ENCODE measurements at regions of chr1 and their contacts with region 1.

Region 1: DNA sequence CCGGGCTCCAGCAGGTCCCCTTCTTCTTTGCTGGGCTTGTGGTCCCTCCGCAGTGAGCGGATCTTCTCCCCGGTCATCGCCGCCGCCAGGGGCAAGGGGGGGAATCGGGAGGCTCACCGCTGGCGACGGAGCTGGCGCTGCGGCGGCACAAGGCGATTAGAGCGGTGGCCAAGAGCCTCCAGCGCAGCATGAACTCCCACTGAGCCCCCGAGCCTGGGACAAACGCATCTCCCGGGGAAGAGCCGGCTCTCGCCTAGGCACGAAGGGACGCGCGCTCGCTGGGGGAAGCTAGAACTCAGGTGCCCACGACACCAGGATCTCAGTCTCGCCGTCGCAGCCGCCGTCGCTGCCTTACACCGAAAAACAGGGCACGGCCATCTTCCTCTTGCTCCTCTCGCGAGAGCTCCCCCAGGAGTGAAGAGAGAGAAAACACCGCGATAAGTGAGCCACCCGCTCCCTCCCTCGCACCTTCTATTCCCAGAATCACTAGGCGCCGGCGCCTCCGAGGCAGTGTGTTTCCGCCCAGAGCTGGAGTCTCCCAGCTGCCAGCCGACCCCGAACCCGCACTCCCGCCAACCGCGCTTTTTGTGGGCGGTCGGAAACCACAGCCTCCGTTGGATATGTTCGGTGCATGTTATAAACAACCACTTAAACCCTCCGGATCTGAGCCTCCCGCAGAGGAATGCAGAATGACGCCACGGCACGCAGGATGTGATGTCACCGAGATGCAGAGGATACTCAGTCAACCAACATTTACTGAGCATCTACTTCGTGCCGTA is at the start of gene ANKRD13C:
- DNase-seq: peak; percentile 95
- ATAC-seq: peak; percentile 89
- H3K4me3 ChIP-seq: peak within 1 kb of the TSS; percentile 75 to 99 (median 95)
- H3K4me3 Mint-ChIP-seq: peak within 1 kb of the TSS; percentile 96
- H3K27ac ChIP-seq: peak within 1 kb of the TSS; percentile 91 to 93
- H3K27ac Mint-ChIP-seq: peak within 1 kb of the TSS; percentile 97
- H3K4me1 ChIP-seq: peaks cover 20 to 21% of the 10 kb centered on the region in 2 donors
- H3K4me1 Mint-ChIP-seq: peaks cover 40% of the 10 kb centered on the region
- H3K27me3 ChIP-seq: no peaks in the 10 kb centered on the region
- H3K27me3 Mint-ChIP-seq: no peaks in the 10 kb centered on the region
- CTCF ChIP-seq: no peak
- total RNA-seq, gene ANKRD13C: 29.9 and 31.9 TPM in 2 replicates

Region 2: DNA sequence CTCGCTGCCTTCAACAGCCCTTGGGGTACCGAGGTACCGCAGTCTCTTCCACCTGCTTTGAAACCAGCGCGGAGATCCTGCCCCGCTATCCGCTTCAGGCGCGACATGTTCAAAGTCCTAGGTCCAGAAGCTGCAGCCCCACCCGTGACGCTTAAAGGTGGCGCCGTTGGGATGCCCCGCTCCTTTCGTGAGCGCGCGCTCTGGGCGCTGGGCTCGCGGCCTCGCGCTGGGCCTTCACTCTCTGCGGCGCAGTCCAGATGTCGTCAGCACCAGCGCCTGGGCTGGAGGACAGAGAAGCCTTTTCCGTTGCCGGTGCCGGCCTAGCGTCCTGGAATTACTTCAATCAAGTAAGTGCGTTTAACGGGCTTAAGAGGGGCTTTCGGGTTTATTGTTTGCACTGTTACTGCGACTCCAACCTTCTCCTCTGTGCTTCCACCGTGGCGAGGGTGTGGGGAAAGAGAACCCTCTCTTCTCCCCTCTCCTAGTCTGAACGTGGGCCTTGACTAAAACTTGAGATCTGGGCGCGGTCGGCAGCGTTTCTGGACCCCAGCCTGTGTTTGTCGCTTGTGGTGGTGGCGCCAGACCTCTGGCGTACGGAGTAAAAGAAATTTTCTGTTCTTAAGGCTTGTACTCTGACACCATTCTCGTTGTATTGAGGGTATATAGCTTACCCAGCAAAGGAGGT is 148.9 kb before region 1 on chr1 and contains the start of gene LRRC40:
- CTCF ChIA-PET with region 1: no interaction called
- POLR2A ChIA-PET with region 1: no interaction called
- intact Hi-C with region 1: loop called (anchors 1 kb)
- DNase-seq: peak; percentile 96
- ATAC-seq: peak; percentile 96
- H3K4me3 ChIP-seq: peak within 1 kb of the TSS; percentile 63 to 93 (median 91)
- H3K4me3 Mint-ChIP-seq: peak within 1 kb of the TSS; percentile 98
- H3K27ac ChIP-seq: peak within 1 kb of the TSS; percentile 86 to 92
- H3K27ac Mint-ChIP-seq: peak within 1 kb of the TSS; percentile 98
- H3K4me1 ChIP-seq: peaks cover 18 to 30% of the 10 kb centered on the region in 2 donors
- H3K4me1 Mint-ChIP-seq: peaks cover 66% of the 10 kb centered on the region
- H3K27me3 ChIP-seq: no peaks in the 10 kb centered on the region
- H3K27me3 Mint-ChIP-seq: no peaks in the 10 kb centered on the region
- CTCF ChIP-seq: no peak
- total RNA-seq, gene LRRC40: 14.5 and 14.6 TPM in 2 replicates

Region 3: DNA sequence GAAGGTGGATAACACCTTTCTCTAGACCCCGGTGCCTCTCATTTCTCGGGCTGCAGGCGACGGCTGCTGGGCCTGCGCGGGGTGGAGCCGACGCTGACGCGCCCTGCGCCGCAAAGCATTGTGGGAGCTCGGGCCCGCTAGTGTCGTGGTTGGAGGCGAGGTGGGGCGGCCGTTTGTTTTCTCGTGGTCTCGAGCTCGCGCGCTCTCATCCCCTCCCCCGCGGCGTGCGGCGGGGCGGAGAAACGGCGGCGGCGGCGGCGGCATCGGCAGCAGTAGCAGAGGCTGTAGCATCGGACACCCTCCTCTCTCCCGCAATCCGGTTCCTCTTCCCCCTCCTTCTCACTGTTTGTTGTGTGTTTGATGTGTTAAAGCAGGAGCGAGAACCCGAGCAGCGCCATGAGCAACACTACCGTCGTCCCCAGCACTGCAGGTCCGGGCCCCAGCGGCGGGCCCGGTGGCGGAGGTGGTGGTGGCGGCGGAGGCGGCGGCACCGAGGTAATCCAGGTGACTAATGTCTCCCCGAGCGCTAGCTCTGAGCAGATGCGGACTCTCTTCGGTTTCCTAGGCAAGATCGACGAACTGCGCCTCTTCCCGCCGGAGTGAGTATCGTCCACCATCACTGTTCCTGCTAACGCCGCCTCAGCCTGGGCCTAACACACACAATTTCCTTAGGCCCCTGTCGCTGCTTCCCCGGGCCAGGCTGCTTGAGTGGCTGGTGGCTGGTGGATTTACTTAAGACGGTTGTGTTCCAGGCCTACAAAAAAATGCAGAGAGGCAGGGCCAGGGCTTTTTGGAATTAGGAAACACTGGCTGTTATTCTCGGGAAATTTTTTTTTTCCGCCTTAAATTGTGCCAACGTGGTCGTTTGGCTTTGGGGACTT is 133.0 kb before region 1 on chr1 and contains the start of gene SRSF11:
- CTCF ChIA-PET with region 1: interaction called, 4 read pairs
- POLR2A ChIA-PET with region 1: interaction called, 4 read pairs
- intact Hi-C with region 1: loop called (anchors 1 kb)
- DNase-seq: peak; percentile 97
- ATAC-seq: peak; percentile 96
- H3K4me3 ChIP-seq: peak within 1 kb of the TSS; percentile 69 to 81 (median 79)
- H3K4me3 Mint-ChIP-seq: peak within 1 kb of the TSS; percentile 93
- H3K27ac ChIP-seq: peak within 1 kb of the TSS; percentile 94
- H3K27ac Mint-ChIP-seq: peak within 1 kb of the TSS; percentile 97
- H3K4me1 ChIP-seq: peaks cover 11 to 25% of the 10 kb centered on the region in 2 donors
- H3K4me1 Mint-ChIP-seq: peaks cover 47% of the 10 kb centered on the region
- H3K27me3 ChIP-seq: no peaks in the 10 kb centered on the region
- H3K27me3 Mint-ChIP-seq: no peaks in the 10 kb centered on the region
- CTCF ChIP-seq: no peak
- total RNA-seq, gene SRSF11: 322 and 333 TPM in 2 replicates

Region 4: DNA sequence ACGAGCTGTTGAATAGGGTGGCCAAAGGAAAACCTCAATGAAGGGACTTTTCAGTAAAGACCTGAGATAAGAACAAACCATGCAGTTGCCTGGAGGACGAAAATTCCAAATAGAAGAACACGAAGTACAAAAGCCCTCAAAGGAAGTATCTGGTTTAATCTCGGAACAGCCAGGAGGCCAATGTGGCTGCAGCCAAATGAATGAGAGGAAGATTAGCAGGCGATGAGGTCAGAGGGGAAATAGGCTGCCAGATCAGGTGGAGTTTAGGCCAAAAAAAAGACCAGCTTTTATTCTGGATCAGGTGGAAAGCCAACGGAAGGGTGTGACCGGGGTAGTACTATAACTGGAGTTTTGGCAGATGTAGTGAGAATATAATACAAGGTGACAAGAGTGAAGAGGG is 89.7 kb before region 1 on chr1:
- CTCF ChIA-PET with region 1: no interaction called
- POLR2A ChIA-PET with region 1: no interaction called
- intact Hi-C with region 1: no loop called
- DNase-seq: no peak
- ATAC-seq: no peak
- H3K4me3 ChIP-seq: no peak overlapping the region
- H3K4me3 Mint-ChIP-seq: no peak overlapping the region
- H3K27ac ChIP-seq: no peak overlapping the region
- H3K27ac Mint-ChIP-seq: no peak overlapping the region
- H3K4me1 ChIP-seq: no peaks in the 10 kb centered on the region
- H3K4me1 Mint-ChIP-seq: no peaks in the 10 kb centered on the region
- H3K27me3 ChIP-seq: no peaks in the 10 kb centered on the region
- H3K27me3 Mint-ChIP-seq: no peaks in the 10 kb centered on the region
- CTCF ChIP-seq: no peak

Region 5: DNA sequence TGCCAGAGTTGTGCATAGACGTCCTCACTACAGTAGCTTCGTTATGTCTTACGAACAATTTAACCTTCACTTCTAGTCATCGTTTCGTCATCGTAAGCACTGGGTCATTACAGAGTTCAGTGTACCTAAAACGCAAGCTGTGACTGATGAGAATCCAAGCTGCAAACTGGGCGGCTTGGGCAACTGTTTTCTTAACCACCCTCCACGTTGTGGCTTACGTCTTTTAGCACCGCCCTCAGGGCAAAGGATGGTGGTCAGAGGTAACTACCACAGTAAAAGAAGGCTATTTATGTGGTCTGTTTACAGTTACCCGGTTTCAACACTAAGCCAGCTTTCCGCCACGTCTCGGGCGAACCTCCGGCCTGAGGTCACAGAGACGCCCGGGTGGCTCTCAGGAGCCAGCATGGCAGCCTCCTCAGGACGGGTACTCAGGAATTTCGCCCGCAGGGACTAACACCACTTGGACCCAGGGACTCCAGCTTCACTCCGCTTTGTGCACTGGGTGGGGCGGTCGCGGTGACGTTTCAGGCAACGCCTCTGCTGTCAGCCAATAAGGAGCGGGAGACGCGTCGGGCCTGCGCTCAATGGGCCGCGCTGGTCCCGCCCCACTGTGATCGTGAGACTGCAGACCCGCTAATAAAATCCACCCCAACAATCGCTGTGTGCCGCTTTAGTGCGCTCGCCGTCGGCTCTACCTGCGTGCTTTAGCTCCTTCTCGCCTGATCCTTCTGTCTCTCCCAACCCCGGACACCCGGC is 56.3 kb after region 1 on chr1 and contains the start of gene CTH:
- CTCF ChIA-PET with region 1: interaction called, 16 read pairs
- POLR2A ChIA-PET with region 1: interaction called, 20 read pairs
- intact Hi-C with region 1: loop called (anchors 1 kb)
- DNase-seq: peak; percentile 95
- ATAC-seq: peak; percentile 96
- H3K4me3 ChIP-seq: peak within 1 kb of the TSS; percentile 72 to 98 (median 84)
- H3K4me3 Mint-ChIP-seq: peak within 1 kb of the TSS; percentile 91
- H3K27ac ChIP-seq: peak within 1 kb of the TSS; percentile 90 to 94
- H3K27ac Mint-ChIP-seq: peak within 1 kb of the TSS; percentile 98
- H3K4me1 ChIP-seq: peaks cover 13 to 24% of the 10 kb centered on the region in 2 donors
- H3K4me1 Mint-ChIP-seq: peaks cover 24% of the 10 kb centered on the region
- H3K27me3 ChIP-seq: no peaks in the 10 kb centered on the region
- H3K27me3 Mint-ChIP-seq: peaks cover 11% of the 10 kb centered on the region
- CTCF ChIP-seq: no peak
- total RNA-seq, gene CTH: 3.9 and 4.9 TPM in 2 replicates

Measured in B cell (primary cell).